Panc1 (cell line): ENCODE measurements at regions of chr1 and their contacts with region 1.

Region 1: GRCh38 chr1:13662493-13662892 is 37.5 kb upstream of the PRDM2 start:
- DNase-seq: no peak
- ATAC-seq: no peak
- H3K4me3 ChIP-seq: no peak overlapping the region
- H3K27ac ChIP-seq: no peak overlapping the region
- H3K4me1 ChIP-seq: no peaks in the 10 kb centered on the region
- H3K27me3 ChIP-seq: no peaks in the 10 kb centered on the region
- CTCF ChIP-seq: no peak

Region 2: DNA sequence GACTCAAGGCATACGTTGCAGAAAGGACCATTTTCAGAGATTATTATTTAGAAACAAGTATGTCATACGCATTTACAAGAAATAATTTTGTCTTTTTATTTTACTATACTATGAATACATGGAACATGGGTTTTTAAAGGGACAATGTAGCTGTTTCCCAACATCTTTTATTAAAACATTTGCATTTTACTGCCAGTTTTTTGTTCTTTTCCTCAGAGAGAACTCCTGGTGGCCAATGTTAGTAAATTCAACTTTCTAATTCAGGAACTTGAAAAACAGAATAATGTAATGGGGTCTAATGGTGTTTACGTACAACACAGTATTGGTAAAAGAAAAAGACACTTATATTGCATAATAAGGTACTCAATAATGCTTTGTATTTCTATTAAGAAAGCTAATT is 52.4 kb after region 1 on chr1:
- CTCF ChIA-PET with region 1: no interaction called
- POLR2A ChIA-PET with region 1: no interaction called
- in situ Hi-C with region 1: no loop called
- intact Hi-C with region 1: no loop called
- DNase-seq: no peak
- ATAC-seq: no peak
- H3K4me3 ChIP-seq: no peak overlapping the region
- H3K27ac ChIP-seq: no peak overlapping the region
- H3K4me1 ChIP-seq: no peaks in the 10 kb centered on the region
- H3K27me3 ChIP-seq: no peaks in the 10 kb centered on the region
- CTCF ChIP-seq: peak; percentile 9; the same call in 1 of the 2 replicates

Region 3: GRCh38 chr1:13807213-13807612 is 144.7 kb after region 1 on chr1:
- CTCF ChIA-PET with region 1: no interaction called
- POLR2A ChIA-PET with region 1: no interaction called
- in situ Hi-C with region 1: no loop called
- intact Hi-C with region 1: loop called (anchors 10 kb)
- DNase-seq: no peak
- ATAC-seq: peak; percentile 60; the same call in 1 of the 2 replicates
- H3K4me3 ChIP-seq: no peak overlapping the region
- H3K27ac ChIP-seq: no peak overlapping the region
- H3K4me1 ChIP-seq: no peaks in the 10 kb centered on the region
- H3K27me3 ChIP-seq: no peaks in the 10 kb centered on the region
- CTCF ChIP-seq: peak; percentile 64